ENCODE measurements at regions of chr18 and their contacts with region 1.

Region 1: DNA sequence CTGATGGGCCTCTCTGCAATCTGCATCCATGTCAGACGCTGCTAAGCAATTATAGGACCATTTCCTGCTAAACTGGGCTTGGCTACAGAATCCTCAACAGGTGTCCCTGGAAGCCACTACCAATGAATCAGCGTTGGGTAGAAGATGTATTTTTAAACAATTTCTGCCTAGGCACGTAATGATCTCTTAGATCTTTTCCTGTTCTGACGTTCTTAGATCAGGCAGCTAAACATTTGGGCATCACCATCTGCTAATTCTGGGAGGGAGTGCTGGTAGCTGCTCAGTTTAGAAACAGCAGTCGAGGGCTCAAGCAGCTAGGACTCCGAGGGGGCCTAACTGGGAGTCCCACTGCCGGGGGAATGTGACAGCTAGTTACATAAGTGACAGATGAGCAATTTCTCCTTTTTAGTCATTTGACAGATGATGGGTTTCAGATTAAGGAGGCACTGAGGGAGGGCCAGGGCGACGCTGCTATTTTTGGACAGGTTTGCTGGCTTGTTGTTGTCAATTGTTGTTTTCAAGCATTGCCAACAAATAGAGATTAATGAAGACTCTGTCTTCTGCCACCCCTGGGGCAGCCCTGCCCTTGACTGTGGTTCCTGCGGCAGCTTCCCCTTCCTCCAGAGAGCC is 92.7 kb downstream of the MRO start:
- DNase-seq: no peak

Region 2: DNA sequence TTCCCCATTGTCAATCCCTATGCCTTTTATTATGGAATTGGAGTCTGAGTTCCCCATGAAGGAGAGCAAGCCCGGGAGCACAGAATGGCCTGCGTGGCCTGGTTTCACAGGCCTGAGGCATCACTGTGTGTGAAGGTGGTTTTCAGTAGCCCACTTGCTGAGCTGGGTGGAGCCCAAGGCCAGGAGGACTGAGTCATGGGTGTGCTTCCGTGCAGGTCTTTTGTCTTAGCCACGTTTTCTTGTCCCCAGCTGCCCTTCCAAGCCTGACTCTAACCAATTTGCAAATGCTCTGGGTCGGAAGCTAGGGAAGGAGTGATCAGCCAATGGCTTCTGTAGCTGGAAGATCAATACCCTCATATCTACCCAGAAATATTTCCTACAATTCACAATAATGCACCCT is 48.0 kb before region 1 on chr18:
- intact Hi-C with region 1: loop called (anchors 5 kb)
- DNase-seq: peak; percentile 46

Region 3: DNA sequence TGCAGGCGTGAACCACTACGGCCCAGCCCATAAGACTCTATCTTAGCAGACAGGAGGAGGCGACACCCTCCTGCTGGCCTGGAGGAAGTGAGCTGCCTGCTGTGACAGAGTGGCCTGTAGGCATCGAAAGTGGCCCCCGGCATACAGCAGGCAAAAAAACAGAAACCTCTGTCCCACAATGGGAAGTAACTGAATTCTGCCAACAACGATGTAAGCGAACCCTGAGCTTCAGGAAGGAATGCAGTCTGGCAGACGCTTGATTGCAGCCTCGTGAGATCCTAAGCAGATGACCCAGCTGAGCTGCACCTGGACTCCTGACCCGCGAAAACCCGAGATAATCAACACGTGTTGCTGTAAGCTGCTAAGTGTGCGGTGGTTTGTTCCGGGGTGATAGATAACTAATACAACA is 79.1 kb after region 1 on chr18:
- intact Hi-C with region 1: no loop called
- DNase-seq: no peak

Measured in cardiac septum (tissue), 1 donor.